Mucosa of descending colon (tissue), 3 donors: ENCODE measurements at regions of chr12 and their contacts with region 1.

Region 1: GRCh38 chr12:40312982-40313576 is 88.3 kb downstream of the LRRK2 start:
- DNase-seq: peak in 1 of 3 donors; percentile 3
- ATAC-seq: no peak
- H3K4me3 ChIP-seq: no peak overlapping the region
- H3K4me1 ChIP-seq: no peaks in the 10 kb centered on the region
- CTCF ChIP-seq: no peak

Region 2: GRCh38 chr12:40152783-40153383 is 160.2 kb before region 1 on chr12:
- intact Hi-C with region 1: loop called in 1 of 2 experiments (anchors 5 kb)
- DNase-seq: peak in 2 of 3 donors; percentile 43 to 74
- ATAC-seq: peak; percentile 60
- H3K4me3 ChIP-seq: no peak overlapping the region
- H3K4me1 ChIP-seq: no peaks in the 10 kb centered on the region
- CTCF ChIP-seq: peak; percentile 74

Region 3: DNA sequence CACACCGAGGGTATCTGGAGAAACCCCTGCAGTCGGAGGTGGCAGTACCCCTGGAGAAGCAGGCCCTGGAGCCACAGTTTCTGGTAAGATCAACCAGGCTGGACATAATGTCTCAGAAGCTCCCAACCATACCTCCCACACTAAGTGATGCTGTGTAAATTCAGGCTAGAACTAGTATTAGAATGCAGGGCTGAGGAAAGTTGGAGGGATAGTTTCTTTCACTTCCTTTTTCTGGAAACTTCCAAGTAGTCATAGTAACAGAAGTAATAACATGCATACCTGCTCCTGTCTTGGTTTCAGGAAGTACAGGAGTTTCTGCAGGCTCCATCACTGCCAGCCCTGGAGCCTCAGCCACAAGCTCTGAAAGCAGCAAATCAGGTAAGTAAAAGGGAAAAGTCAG is 151.0 kb after region 1 on chr12:
- intact Hi-C with region 1: no loop called
- DNase-seq: no peak
- ATAC-seq: no peak
- H3K4me3 ChIP-seq: no peak overlapping the region
- H3K4me1 ChIP-seq: no peaks in the 10 kb centered on the region
- CTCF ChIP-seq: no peak